ENCODE measurements at regions of chr4 and their contacts with region 1.

Region 1: GRCh38 chr4:47562297-47562696 is 77.2 kb downstream of the ATP10D start:
- DNase-seq: no peak
- H3K4me3 ChIP-seq: no peak overlapping the region
- H3K27ac ChIP-seq: no peak overlapping the region
- H3K27me3 ChIP-seq: no peaks in the 10 kb centered on the region
- CTCF ChIP-seq: no peak

Region 2: DNA sequence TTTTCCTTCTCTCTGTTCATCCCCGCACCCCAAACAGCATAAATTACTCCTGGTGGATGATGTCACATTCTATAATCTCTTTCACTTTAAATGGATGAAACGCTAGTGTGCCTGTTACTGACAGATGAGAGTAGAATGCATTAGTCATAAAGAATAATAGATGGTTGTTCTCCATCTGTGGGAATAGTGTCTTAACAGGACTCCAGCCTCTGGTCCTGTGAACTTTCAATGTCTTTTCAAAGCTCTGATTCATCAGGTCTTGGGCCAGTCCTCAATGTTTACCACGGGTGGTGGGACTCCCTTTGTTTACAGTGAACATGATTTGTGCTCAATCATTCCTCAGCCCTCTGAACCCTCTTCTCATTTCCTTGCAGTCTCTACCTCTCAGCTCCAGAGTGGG is 348.3 kb before region 1 on chr4:
- CTCF ChIA-PET with region 1: no interaction called
- POLR2A ChIA-PET with region 1: no interaction called
- DNase-seq: peak; percentile 66
- H3K4me3 ChIP-seq: no peak overlapping the region
- H3K27ac ChIP-seq: peak overlapping the region; percentile 80
- H3K27me3 ChIP-seq: no peaks in the 10 kb centered on the region
- CTCF ChIP-seq: no peak

Region 3: GRCh38 chr4:47510506-47511143 is 51.7 kb before region 1 on chr4:
- CTCF ChIA-PET with region 1: interaction called, 16 read pairs
- POLR2A ChIA-PET with region 1: no interaction called
- DNase-seq: no peak
- H3K4me3 ChIP-seq: no peak overlapping the region
- H3K27ac ChIP-seq: no peak overlapping the region
- H3K27me3 ChIP-seq: no peaks in the 10 kb centered on the region
- CTCF ChIP-seq: peak; percentile 44

Region 4: DNA sequence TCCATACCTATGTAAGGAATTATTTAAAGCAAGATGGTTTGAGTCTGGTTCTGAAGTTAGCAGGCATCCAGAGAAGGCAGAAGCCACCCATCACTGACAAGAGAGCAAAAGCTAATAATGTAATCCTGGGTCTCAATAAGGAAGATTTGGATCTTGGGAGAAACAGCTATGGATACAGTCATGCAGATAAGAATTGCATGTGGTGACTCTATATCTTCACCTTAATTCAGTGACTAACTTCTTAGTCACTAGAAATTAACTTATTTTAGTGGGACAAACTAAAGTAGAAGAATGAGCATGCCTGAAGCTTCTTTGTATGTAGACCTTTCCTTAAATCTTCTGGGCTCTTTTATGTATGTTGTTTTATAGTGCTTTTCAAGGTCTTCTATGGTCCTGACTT is 10.6 kb before region 1 on chr4:
- CTCF ChIA-PET with region 1: interaction called, 11 read pairs
- POLR2A ChIA-PET with region 1: no interaction called
- DNase-seq: no peak
- H3K4me3 ChIP-seq: no peak overlapping the region
- H3K27ac ChIP-seq: peak overlapping the region; percentile 42
- H3K27me3 ChIP-seq: no peaks in the 10 kb centered on the region
- CTCF ChIP-seq: no peak

Region 5: DNA sequence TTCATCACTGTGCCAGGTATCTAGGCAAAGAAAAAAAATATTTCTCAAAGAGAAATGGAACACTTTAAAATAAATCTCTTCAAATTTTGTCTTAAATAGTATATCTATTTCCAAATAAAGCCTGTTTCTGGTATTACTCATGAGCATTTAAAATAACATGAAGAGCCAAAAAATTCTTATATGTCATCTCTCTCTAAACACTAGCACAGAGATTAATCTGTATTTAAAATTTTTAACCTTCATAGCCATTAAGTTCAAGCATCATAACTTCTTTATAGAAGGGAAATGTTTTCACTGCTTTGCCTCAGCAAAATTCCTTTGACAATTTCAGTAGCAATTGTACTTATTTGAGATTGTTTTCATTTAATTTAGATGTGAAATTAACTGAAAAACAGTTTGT is 280.7 kb after region 1 on chr4:
- CTCF ChIA-PET with region 1: no interaction called
- POLR2A ChIA-PET with region 1: no interaction called
- DNase-seq: no peak
- H3K4me3 ChIP-seq: no peak overlapping the region
- H3K27ac ChIP-seq: no peak overlapping the region
- H3K27me3 ChIP-seq: no peaks in the 10 kb centered on the region
- CTCF ChIP-seq: no peak

Measured in AG04450 (cell line).